ENCODE measurements at regions of chr6 and their contacts with region 1.

Region 1: DNA sequence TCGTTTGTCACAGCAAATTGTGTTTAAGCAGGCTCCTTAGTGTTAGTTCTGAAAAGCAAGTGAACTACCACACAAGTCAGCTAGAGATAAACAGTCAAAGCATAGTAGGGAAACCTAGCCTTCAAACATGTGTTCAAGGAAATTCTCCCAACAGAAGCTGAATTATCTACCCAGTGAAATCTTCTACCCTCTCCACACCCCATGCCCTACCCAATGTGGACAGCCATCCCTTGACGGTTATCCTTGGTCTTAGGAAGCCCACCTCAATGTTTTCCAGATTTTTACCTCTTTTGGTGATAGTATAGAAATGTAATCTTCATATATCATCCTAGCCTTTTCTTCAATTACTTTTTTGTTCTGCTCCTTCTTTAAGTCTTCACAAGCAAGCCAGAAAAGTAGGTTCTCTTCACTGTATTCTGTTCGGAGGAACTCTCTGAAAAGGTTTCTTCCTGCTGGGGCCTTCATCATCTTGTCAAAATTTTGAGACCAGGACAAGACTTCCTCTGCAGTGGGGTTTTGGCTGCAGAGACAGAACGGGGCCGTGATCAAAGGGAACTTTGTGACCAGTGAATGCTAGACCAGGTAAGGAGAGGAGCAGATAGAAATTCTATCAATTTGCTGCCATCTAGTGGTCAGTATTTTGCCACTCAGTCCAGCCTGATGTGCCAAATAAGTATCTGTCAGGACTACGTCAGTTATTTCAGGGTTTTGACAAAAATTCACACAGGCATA is 21.6 kb upstream of the MTRF1L start:
- DNase-seq: peak; percentile 65 to 80 (median 69)
- ATAC-seq: peak; percentile 99
- H3K4me3 ChIP-seq: no peak overlapping the region
- H3K27ac ChIP-seq: no peak overlapping the region
- H3K4me1 ChIP-seq: no peaks in the 10 kb centered on the region
- H3K27me3 ChIP-seq: peaks cover 0 to 7% of the 10 kb centered on the region in 2 experiments; a peak in 2 of 5 replicates
- CTCF ChIP-seq: peak; percentile 68 to 93 (median 80)
- EP300 ChIP-seq: no peak
- POLR2A ChIP-seq: no peak
- RAD21 ChIP-seq: peak; percentile 81 to 86

Region 2: DNA sequence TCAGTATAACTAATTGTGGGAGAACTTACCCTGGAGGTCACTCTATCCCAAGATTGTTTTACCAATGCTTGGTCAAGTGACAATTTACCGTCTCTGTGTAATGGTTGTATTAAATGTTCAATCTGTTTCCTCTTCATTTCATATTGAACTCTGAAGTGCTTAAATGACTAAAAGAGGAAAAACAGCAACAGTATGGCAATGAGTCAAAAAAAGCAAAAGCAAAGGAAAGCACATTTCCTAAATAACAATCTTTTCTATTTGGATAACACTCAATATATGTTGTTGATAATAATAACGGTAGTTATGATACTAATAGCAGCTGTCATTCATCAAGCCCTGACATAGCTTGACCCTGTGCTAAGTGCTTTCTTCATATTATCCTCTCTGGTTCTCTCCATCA is 539.3 kb before region 1 on chr6:
- CTCF ChIA-PET with region 1: no interaction called
- POLR2A ChIA-PET with region 1: no interaction called
- in situ Hi-C with region 1: no loop called
- intact Hi-C with region 1: loop called (anchors 5 kb)
- DNase-seq: no peak
- ATAC-seq: no peak
- H3K4me3 ChIP-seq: no peak overlapping the region
- H3K27ac ChIP-seq: no peak overlapping the region
- H3K4me1 ChIP-seq: no peaks in the 10 kb centered on the region
- H3K27me3 ChIP-seq: no peaks in the 10 kb centered on the region
- CTCF ChIP-seq: no peak
- EP300 ChIP-seq: no peak
- POLR2A ChIP-seq: no peak
- RAD21 ChIP-seq: no peak

Region 3: GRCh38 chr6:152552616-152553209 is 471.4 kb before region 1 on chr6:
- CTCF ChIA-PET with region 1: no interaction called
- POLR2A ChIA-PET with region 1: no interaction called
- in situ Hi-C with region 1: no loop called
- intact Hi-C with region 1: loop called (anchors 5 kb)
- DNase-seq: peak; percentile 24 to 50 (median 44)
- ATAC-seq: peak; percentile 78
- H3K4me3 ChIP-seq: no peak overlapping the region
- H3K27ac ChIP-seq: no peak overlapping the region
- H3K4me1 ChIP-seq: no peaks in the 10 kb centered on the region
- H3K27me3 ChIP-seq: no peaks in the 10 kb centered on the region
- CTCF ChIP-seq: peak; percentile 43 to 58 (median 47)
- EP300 ChIP-seq: no peak
- POLR2A ChIP-seq: no peak
- RAD21 ChIP-seq: peak; percentile 40 to 60; a peak in 3 of 4 replicates

Region 4: DNA sequence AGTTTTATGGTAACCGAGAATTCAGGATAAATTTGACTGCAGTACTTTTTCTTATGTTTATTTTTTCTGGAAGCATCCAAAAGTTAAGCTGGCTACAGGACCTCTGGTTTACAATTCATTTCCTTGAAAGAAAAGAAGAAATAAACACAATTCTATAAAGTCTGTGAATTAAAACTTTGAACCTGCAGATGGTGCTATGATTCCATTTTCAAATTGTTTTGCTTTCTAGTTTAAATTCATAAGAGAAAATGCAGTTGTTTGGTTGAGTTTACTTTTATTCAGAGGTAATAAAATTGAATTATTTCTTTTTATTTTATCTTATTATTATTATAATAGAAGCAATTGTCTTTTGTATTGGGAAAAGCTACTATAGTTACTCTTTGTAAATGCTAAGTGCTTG is 275.3 kb before region 1 on chr6:
- CTCF ChIA-PET with region 1: interaction called, 6 read pairs
- POLR2A ChIA-PET with region 1: no interaction called
- in situ Hi-C with region 1: no loop called
- intact Hi-C with region 1: loop called (anchors 2 kb)
- DNase-seq: peak in 1 of 4 experiments; percentile 24
- ATAC-seq: no peak
- H3K4me3 ChIP-seq: no peak overlapping the region
- H3K27ac ChIP-seq: no peak overlapping the region
- H3K4me1 ChIP-seq: no peaks in the 10 kb centered on the region
- H3K27me3 ChIP-seq: no peaks in the 10 kb centered on the region
- CTCF ChIP-seq: peak in 1 of 3 experiments; percentile 56; a peak in 3 of 6 replicates
- EP300 ChIP-seq: no peak
- POLR2A ChIP-seq: no peak
- RAD21 ChIP-seq: peak; percentile 47 to 63

Region 5: GRCh38 chr6:152863618-152864326 is 160.4 kb before region 1 on chr6:
- CTCF ChIA-PET with region 1: interaction called, 5 read pairs
- POLR2A ChIA-PET with region 1: no interaction called
- in situ Hi-C with region 1: no loop called
- intact Hi-C with region 1: loop called (anchors 1 kb)
- DNase-seq: peak; percentile 48 to 88 (median 56)
- ATAC-seq: peak; percentile 97
- H3K4me3 ChIP-seq: no peak overlapping the region
- H3K27ac ChIP-seq: no peak overlapping the region
- H3K4me1 ChIP-seq: peaks cover 0 to 3% of the 10 kb centered on the region in 2 experiments; a peak in 1 of 5 replicates
- H3K27me3 ChIP-seq: no peaks in the 10 kb centered on the region
- CTCF ChIP-seq: peak; percentile 64 to 91 (median 73)
- EP300 ChIP-seq: no peak
- POLR2A ChIP-seq: no peak
- RAD21 ChIP-seq: peak; percentile 83 to 91

Region 6: GRCh38 chr6:152954443-152954842 is 69.7 kb before region 1 on chr6:
- CTCF ChIA-PET with region 1: interaction called, 24 read pairs
- POLR2A ChIA-PET with region 1: no interaction called
- in situ Hi-C with region 1: no loop called
- intact Hi-C with region 1: loop called (anchors 1 kb)
- DNase-seq: peak in 3 of 4 experiments; percentile 21 to 35 (median 24)
- ATAC-seq: peak; percentile 78
- H3K4me3 ChIP-seq: no peak overlapping the region
- H3K27ac ChIP-seq: no peak overlapping the region
- H3K4me1 ChIP-seq: no peaks in the 10 kb centered on the region
- H3K27me3 ChIP-seq: peaks cover 4 to 12% of the 10 kb centered on the region in 2 experiments
- CTCF ChIP-seq: peak; percentile 17 to 58 (median 28); a peak in 3 of 6 replicates
- EP300 ChIP-seq: no peak
- POLR2A ChIP-seq: no peak
- RAD21 ChIP-seq: peak; percentile 35 to 72; a peak in 3 of 4 replicates

Region 7: GRCh38 chr6:154370545-154370944 is 1346.4 kb after region 1 on chr6:
- CTCF ChIA-PET with region 1: no interaction called
- POLR2A ChIA-PET with region 1: no interaction called
- in situ Hi-C with region 1: no loop called
- intact Hi-C with region 1: loop called (anchors 10 kb)
- DNase-seq: peak in 2 of 4 experiments; percentile 26 to 41
- ATAC-seq: peak; percentile 85
- H3K4me3 ChIP-seq: no peak overlapping the region
- H3K27ac ChIP-seq: no peak overlapping the region
- H3K4me1 ChIP-seq: no peaks in the 10 kb centered on the region
- H3K27me3 ChIP-seq: peaks cover 25 to 35% of the 10 kb centered on the region in 2 experiments; a peak in 4 of 5 replicates
- CTCF ChIP-seq: peak; percentile 41 to 59 (median 51); a peak in 4 of 6 replicates
- EP300 ChIP-seq: no peak
- POLR2A ChIP-seq: no peak
- RAD21 ChIP-seq: peak; percentile 42 to 46; a peak in 3 of 4 replicates

Measured in K562 (cell line).